ENCODE measurements at regions of chr17 and their contacts with region 1.

Region 1: DNA sequence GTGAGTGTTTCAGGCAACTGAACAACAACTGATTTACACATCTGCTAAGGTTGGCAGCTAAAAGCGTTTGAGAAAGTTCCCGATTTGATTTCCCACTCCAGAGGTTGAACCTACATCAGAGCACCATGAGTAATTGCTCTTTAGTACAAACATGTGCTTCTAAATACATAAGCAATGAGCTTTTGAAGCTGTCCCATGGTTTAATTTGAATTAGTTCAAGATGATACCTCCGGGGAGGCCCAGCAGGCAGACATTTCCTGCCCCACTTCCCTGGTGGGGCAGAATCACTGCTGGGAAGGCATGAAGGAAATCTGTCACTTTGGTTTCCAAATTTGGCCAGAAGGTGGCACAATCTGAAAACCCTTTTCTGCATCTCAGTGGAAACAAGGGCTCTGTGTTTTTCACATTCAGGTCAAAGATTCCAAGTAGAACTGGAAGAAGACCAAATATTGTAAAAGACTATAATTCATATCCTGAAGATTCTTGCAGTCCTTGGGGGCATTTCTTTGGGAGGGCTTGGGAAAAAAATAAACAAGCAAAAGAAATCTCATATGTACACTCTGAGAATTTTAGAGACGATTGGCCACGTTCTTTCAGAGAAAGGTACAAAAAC is 176.2 kb upstream of the FAM20A start:
- DNase-seq: peak; percentile 48
- ATAC-seq: no peak
- H3K4me3 ChIP-seq: no peak overlapping the region
- H3K27ac ChIP-seq: no peak overlapping the region
- H3K4me1 ChIP-seq: no peaks in the 10 kb centered on the region
- H3K27me3 ChIP-seq: no peaks in the 10 kb centered on the region
- CTCF ChIP-seq: peak; percentile 70

Region 2: DNA sequence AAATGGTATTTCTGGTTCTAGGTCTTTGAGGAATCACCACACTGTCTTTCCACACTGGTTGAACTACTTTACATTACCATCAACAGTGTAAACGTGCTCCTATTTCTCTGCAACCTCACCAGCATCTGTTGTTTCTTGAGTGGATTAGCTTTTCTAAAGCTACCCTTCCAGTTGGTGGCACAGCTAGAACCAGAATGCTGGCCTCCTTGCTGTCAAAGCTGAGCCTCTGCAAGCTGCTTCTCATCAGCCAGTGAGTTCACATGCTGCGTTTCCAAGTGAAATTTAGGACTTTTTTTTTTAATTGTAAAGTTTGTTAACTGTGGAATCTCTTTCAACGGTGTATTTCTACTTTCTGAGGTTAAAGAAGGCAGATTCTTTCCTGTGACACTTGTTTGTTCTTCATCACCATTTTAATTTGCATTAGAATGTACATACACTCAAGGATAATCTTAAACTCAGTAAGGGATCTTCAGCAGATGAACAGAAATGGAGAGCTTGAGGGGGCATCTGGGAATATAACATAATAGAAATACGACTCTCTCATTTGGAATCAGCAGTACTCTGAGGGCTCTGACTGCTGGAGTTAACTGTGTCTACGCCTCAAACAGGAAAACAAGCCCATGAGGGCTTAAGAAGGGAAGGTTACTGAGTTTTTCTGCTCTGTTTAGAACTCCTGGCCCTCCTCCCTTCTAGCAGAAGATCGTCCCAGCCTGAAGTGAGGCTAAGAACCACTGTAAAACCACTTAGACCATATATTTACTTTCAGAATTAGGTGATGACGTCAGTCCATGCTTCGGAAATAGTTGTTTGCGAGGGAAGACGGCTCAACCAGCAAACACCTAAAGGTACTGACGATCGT is 27.8 kb before region 1 on chr17:
- CTCF ChIA-PET with region 1: no interaction called
- POLR2A ChIA-PET with region 1: no interaction called
- in situ Hi-C with region 1: no loop called
- intact Hi-C with region 1: no loop called
- DNase-seq: no peak
- ATAC-seq: no peak
- H3K4me3 ChIP-seq: no peak overlapping the region
- H3K27ac ChIP-seq: no peak overlapping the region
- H3K4me1 ChIP-seq: no peaks in the 10 kb centered on the region
- H3K27me3 ChIP-seq: no peaks in the 10 kb centered on the region
- CTCF ChIP-seq: no peak

Region 3: GRCh38 chr17:68909066-68909465 is 131.7 kb after region 1 on chr17:
- CTCF ChIA-PET with region 1: no interaction called
- POLR2A ChIA-PET with region 1: no interaction called
- in situ Hi-C with region 1: no loop called
- intact Hi-C with region 1: loop called (anchors 5 kb)
- DNase-seq: no peak
- ATAC-seq: no peak
- H3K4me3 ChIP-seq: no peak overlapping the region
- H3K27ac ChIP-seq: no peak overlapping the region
- H3K4me1 ChIP-seq: no peaks in the 10 kb centered on the region
- H3K27me3 ChIP-seq: no peaks in the 10 kb centered on the region
- CTCF ChIP-seq: no peak

Region 4: DNA sequence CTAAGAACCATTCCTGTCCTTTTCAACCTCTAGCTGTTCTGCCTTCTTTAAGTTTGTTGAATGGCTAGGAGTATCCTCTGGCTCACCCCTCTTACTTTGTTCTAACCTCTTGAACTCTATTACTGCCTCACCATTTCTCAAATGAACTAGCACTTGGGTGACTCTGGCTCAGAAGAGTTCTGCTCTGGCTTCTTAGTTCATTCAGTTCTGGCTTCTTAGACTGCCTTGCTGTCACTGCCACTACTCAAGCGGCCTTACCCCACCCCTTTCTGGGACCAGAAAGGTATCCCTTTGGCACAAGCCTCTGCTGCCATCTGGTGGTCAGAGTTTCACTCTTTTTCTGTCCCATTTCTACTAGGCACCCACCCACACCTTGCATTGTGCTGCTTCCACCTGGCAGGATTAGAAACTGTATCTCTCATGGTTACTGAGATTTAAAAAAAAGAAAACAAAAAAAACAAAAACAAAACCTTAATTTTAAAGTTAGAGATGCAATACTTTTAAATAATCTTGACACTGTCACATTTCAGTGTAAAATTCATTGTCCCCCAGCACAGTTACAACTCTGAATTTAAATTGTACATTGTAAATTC is 458.1 kb after region 1 on chr17:
- CTCF ChIA-PET with region 1: interaction called, 3 read pairs
- POLR2A ChIA-PET with region 1: no interaction called
- in situ Hi-C with region 1: no loop called
- intact Hi-C with region 1: loop called (anchors 2 kb)
- DNase-seq: peak; percentile 72
- ATAC-seq: peak; percentile 93
- H3K4me3 ChIP-seq: no peak overlapping the region
- H3K27ac ChIP-seq: no peak overlapping the region
- H3K4me1 ChIP-seq: no peaks in the 10 kb centered on the region
- H3K27me3 ChIP-seq: no peaks in the 10 kb centered on the region
- CTCF ChIP-seq: peak; percentile 82

Measured in Panc1 (cell line).